ENCODE measurements at regions of chr14 and their contacts with region 1.

Region 1: GRCh38 chr14:98203421-98203820 is 1068.6 kb downstream of the BCL11B start:
- DNase-seq: peak in 6 of 9 donors; percentile 40 to 68 (median 50)
- ATAC-seq: peak; percentile 46
- H3K4me3 ChIP-seq: peak overlapping the region; percentile 29
- H3K4me3 Mint-ChIP-seq: peak overlapping the region; percentile 37 to 96 (median 84)
- H3K27ac ChIP-seq: peak overlapping the region; percentile 83
- H3K27ac Mint-ChIP-seq: peak overlapping the region; percentile 69 to 100 (median 97)
- H3K4me1 ChIP-seq: peaks cover 29 to 67% of the 10 kb centered on the region in 2 donors
- H3K4me1 Mint-ChIP-seq: peaks cover 0 to 96% (median 53%) of the 10 kb centered on the region in 7 donors
- H3K27me3 ChIP-seq: no peaks in the 10 kb centered on the region
- H3K27me3 Mint-ChIP-seq: no peaks in the 10 kb centered on the region

Region 2: DNA sequence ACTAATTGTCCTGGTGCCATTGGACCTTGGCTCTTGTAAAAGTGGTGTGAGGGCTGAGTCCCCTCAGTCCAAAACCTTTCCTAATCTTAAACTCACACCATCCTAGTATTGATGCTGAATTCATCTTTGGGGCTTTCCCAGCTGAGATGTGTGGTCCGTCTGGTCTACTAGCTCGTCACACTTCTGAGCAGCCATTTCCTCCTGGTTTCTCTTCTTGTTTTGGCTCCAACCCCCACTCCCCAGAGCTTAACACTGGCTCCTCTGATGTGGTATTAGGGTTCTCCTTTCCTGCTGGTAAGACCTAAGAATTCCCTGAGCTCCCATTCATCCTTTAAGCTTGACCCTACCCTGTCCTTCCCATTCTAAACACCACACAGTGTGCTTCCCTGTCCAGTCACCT is 505.6 kb before region 1 on chr14:
- CTCF ChIA-PET with region 1: no interaction called
- POLR2A ChIA-PET with region 1: no interaction called
- intact Hi-C with region 1: no loop called
- DNase-seq: peak in 1 of 9 donors; percentile 34
- ATAC-seq: peak; percentile 78
- H3K4me3 ChIP-seq: no peak overlapping the region
- H3K4me3 Mint-ChIP-seq: peak overlapping the region in 6 of 10 donors; percentile 30 to 73 (median 49)
- H3K27ac ChIP-seq: no peak overlapping the region
- H3K27ac Mint-ChIP-seq: peak overlapping the region; percentile 12 to 88 (median 53)
- H3K4me1 ChIP-seq: peaks cover 21 to 37% of the 10 kb centered on the region in 2 donors
- H3K4me1 Mint-ChIP-seq: peaks cover 14 to 55% (median 44%) of the 10 kb centered on the region in 7 donors
- H3K27me3 ChIP-seq: no peaks in the 10 kb centered on the region
- H3K27me3 Mint-ChIP-seq: peaks cover 0 to 4% (median 0%) of the 10 kb centered on the region in 5 donors

Region 3: GRCh38 chr14:98219638-98220037 is 16.2 kb after region 1 on chr14:
- CTCF ChIA-PET with region 1: interaction called, 3 read pairs
- POLR2A ChIA-PET with region 1: interaction called, 12 read pairs
- intact Hi-C with region 1: loop called (anchors 2 kb)
- DNase-seq: no peak
- ATAC-seq: no peak
- H3K4me3 ChIP-seq: no peak overlapping the region
- H3K4me3 Mint-ChIP-seq: peak overlapping the region in 4 of 10 donors; percentile 2 to 49 (median 33)
- H3K27ac ChIP-seq: no peak overlapping the region
- H3K27ac Mint-ChIP-seq: peak overlapping the region in 4 of 9 donors; percentile 60 to 83 (median 71)
- H3K4me1 ChIP-seq: peaks cover 32 to 76% of the 10 kb centered on the region in 2 donors
- H3K4me1 Mint-ChIP-seq: peaks cover 26 to 49% (median 29%) of the 10 kb centered on the region in 7 donors
- H3K27me3 ChIP-seq: no peaks in the 10 kb centered on the region
- H3K27me3 Mint-ChIP-seq: no peaks in the 10 kb centered on the region

Region 4: GRCh38 chr14:98542316-98542715 is 338.9 kb after region 1 on chr14:
- CTCF ChIA-PET with region 1: no interaction called
- POLR2A ChIA-PET with region 1: no interaction called
- intact Hi-C with region 1: no loop called
- DNase-seq: no peak
- ATAC-seq: no peak
- H3K4me3 ChIP-seq: no peak overlapping the region
- H3K4me3 Mint-ChIP-seq: peak overlapping the region in 1 of 10 donors; percentile 1
- H3K27ac ChIP-seq: no peak overlapping the region
- H3K27ac Mint-ChIP-seq: peak overlapping the region in 1 of 9 donors; percentile 37
- H3K4me1 ChIP-seq: no peaks in the 10 kb centered on the region
- H3K4me1 Mint-ChIP-seq: peaks cover 0 to 28% (median 9%) of the 10 kb centered on the region in 7 donors
- H3K27me3 ChIP-seq: no peaks in the 10 kb centered on the region
- H3K27me3 Mint-ChIP-seq: no peaks in the 10 kb centered on the region

Region 5: GRCh38 chr14:98612434-98613200 is 409.2 kb after region 1 on chr14:
- CTCF ChIA-PET with region 1: no interaction called
- POLR2A ChIA-PET with region 1: no interaction called
- intact Hi-C with region 1: no loop called
- DNase-seq: no peak
- ATAC-seq: no peak
- H3K4me3 ChIP-seq: no peak overlapping the region
- H3K4me3 Mint-ChIP-seq: no peak overlapping the region
- H3K27ac ChIP-seq: no peak overlapping the region
- H3K27ac Mint-ChIP-seq: no peak overlapping the region
- H3K4me1 ChIP-seq: peaks cover 0 to 3% of the 10 kb centered on the region in 2 donors
- H3K4me1 Mint-ChIP-seq: peaks cover 6 to 23% (median 14%) of the 10 kb centered on the region in 7 donors
- H3K27me3 ChIP-seq: no peaks in the 10 kb centered on the region
- H3K27me3 Mint-ChIP-seq: no peaks in the 10 kb centered on the region

Measured in naive thymus-derived CD4-positive, alpha-beta T cell (primary cell).